Activated T-helper 2 cell treated with anti-CD3 and anti-CD28 coated beads, Interferon-gamma antibody, Interleukin-2, Interleukin-4, amounts not matched to agents 10 μg/mL and 5 μg/mL and 100 μg/mL, durations not matched to agents 14 hours and 24 hours and 36 hours (primary cell): ENCODE measurements at regions of chr22 and their contacts with region 1.

Region 1: DNA sequence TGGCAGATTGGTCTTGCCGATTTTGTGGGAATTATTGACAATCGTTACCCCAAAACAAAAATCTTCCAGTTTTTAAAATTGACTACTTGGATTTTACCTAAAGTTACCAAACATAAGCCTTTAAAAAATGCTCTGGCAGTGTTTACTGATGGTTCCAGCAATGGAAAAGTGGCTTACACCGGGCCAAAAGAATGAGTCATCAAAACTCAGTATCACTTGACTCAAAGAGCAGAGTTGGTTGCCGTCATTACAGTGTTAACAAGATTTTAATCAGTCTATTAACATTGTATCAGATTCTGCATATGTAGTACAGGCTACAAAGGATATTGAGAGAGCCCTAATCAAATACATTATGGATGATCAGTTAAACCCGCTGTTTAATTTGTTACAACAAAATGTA is 37.2 kb downstream of the IGLL1 start:
- DNase-seq: no peak
- H3K4me3 Mint-ChIP-seq: no peak overlapping the region
- H3K27ac Mint-ChIP-seq: no peak overlapping the region
- H3K4me1 Mint-ChIP-seq: peaks cover 8% of the 10 kb centered on the region
- H3K27me3 Mint-ChIP-seq: peaks cover 18% of the 10 kb centered on the region

Region 2: DNA sequence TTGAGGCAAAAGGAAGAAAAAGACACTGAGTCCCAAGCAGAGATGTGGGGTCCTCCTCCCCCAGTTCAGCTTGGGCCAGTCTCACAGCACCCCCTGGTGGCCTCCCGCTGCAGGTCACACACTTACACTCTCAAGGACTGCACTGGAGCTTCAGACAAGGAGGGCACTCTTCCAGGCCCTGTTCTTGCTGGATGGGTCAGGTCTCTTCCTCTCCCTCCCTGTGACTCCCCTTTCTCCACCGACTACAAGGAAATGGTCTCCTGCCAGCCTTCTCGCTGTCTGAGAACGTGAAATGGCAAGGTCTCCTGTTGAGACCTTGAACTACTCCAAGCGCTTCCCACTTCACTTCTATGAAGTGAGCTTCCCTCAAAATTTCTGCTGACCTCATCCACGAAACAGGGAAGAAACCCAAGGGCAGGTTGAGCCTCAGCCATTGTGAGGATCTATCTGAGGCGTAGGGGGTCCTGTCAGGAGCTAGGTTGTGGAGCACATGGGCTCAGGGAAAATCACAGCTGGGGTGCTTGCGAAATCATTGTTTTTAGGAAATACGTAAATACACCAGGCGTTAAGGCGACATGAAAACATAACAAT is 48.4 kb after region 1 on chr22:
- intact Hi-C with region 1: loop called (anchors 5 kb)
- DNase-seq: peak; percentile 37
- H3K4me3 Mint-ChIP-seq: no peak overlapping the region
- H3K27ac Mint-ChIP-seq: no peak overlapping the region
- H3K4me1 Mint-ChIP-seq: peaks cover 2% of the 10 kb centered on the region
- H3K27me3 Mint-ChIP-seq: no peaks in the 10 kb centered on the region

Region 3: GRCh38 chr22:23849009-23850006 is 306.4 kb after region 1 on chr22:
- intact Hi-C with region 1: loop called (anchors 5 kb)
- DNase-seq: peak; percentile 79
- H3K4me3 Mint-ChIP-seq: no peak overlapping the region
- H3K27ac Mint-ChIP-seq: no peak overlapping the region
- H3K4me1 Mint-ChIP-seq: peaks cover 7% of the 10 kb centered on the region
- H3K27me3 Mint-ChIP-seq: peaks cover 10% of the 10 kb centered on the region

Region 4: DNA sequence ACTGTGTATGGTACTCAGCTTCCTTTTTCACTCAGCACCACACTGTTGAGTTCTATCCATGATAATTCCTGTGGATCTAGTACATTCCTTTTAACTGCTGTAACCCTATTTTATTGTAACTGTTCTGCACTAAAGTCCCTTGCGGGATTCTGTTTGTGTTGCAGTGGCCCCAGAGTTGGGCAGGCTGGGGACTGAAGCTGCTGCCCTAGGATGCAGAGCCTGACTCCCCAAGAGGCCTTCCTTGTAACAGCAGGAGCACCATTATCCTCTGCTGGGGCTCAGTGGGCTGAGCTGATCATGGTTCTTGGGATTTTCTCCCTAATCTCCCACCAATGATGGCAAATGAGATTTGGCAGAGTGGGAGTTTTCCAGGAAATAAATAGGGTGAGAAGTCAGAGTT is 545.9 kb after region 1 on chr22:
- intact Hi-C with region 1: no loop called
- DNase-seq: no peak
- H3K4me3 Mint-ChIP-seq: no peak overlapping the region
- H3K27ac Mint-ChIP-seq: no peak overlapping the region
- H3K4me1 Mint-ChIP-seq: peaks cover 12% of the 10 kb centered on the region
- H3K27me3 Mint-ChIP-seq: no peaks in the 10 kb centered on the region